Activated CD8-positive, alpha-beta memory T cell treated with anti-CD3 and anti-CD28 coated beads, Interleukin-2, amount 10 ng/mL, durations not matched to agents 7 days and 5 days (primary cell): ENCODE measurements at regions of chr2 and their contacts with region 1.

Region 1: GRCh38 chr2:126527836-126528507 is 128.0 kb upstream of the GYPC start:
- DNase-seq: peak; percentile 75
- ATAC-seq: peak; percentile 63
- H3K4me3 Mint-ChIP-seq: no peak overlapping the region
- H3K27ac Mint-ChIP-seq: no peak overlapping the region
- H3K4me1 Mint-ChIP-seq: no peaks in the 10 kb centered on the region
- H3K27me3 Mint-ChIP-seq: no peaks in the 10 kb centered on the region

Region 2: GRCh38 chr2:126749537-126749936 is 221.6 kb after region 1 on chr2:
- CTCF ChIA-PET with region 1: interaction called, 12 read pairs
- DNase-seq: peak; percentile 40
- ATAC-seq: peak; percentile 33
- H3K4me3 Mint-ChIP-seq: no peak overlapping the region
- H3K27ac Mint-ChIP-seq: no peak overlapping the region
- H3K4me1 Mint-ChIP-seq: peaks cover 15% of the 10 kb centered on the region
- H3K27me3 Mint-ChIP-seq: peaks cover 2% of the 10 kb centered on the region

Region 3: DNA sequence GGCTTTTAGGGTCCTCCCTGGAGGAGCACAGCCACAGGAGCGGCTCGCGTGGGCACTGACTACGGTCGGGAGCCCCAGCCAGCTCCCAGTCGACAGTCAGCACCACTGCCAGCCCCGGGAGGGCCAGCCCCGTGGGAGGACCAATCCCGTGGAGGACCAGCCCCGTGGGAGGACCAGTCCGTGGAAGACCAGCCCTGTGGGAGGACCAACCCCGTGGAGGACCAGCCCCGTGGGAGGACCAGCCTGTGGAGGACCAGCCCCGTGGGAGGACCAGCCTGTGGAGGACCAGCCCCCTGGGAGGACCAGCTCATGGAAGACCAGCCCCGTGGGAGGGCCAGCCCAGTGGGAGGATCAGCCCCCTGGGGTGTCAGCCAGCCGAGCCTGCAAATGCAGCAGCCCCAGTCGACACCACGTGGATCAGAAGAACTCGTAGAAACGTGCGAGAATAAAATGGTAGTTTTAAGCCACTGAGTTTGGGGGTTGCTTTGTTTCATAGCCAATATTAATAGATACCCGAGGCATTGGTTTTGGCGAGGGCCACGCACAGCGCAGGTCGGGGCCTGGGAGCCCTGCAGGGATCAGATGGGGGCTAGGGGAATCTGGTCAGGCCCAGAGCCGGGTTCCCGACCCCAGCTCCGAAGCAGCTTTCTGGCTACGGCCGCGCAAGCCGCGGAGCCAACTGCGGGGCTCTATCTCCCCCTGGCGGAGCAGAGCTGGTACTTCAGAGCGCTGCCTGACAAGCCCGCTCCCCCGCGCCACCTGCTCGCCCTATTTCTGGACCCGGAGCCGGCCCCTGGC is 443.7 kb after region 1 on chr2:
- CTCF ChIA-PET with region 1: interaction called, 10 read pairs
- DNase-seq: peak; percentile 69
- ATAC-seq: peak; percentile 86
- H3K4me3 Mint-ChIP-seq: no peak overlapping the region
- H3K27ac Mint-ChIP-seq: no peak overlapping the region
- H3K4me1 Mint-ChIP-seq: peaks cover 2% of the 10 kb centered on the region
- H3K27me3 Mint-ChIP-seq: peaks cover 58% of the 10 kb centered on the region